ENCODE measurements at regions of chr22 and their contacts with region 1.

Region 1: GRCh38 chr22:35840302-35840739 is 122.6 kb downstream of the APOL5 start:
- DNase-seq: peak; percentile 90 to 96 (median 91)
- H3K4me3 ChIP-seq: peak overlapping the region in 2 of 4 donors; percentile 27 to 51
- H3K27ac ChIP-seq: peak overlapping the region in 3 of 5 donors; percentile 45 to 64 (median 56)
- H3K4me1 ChIP-seq: peaks cover 18 to 50% of the 10 kb centered on the region in 2 donors
- H3K27me3 ChIP-seq: no peaks in the 10 kb centered on the region
- CTCF ChIP-seq: peak in 2 of 6 experiments; percentile 17 to 23
- POLR2A ChIP-seq: peak; percentile 21 to 80

Region 2: DNA sequence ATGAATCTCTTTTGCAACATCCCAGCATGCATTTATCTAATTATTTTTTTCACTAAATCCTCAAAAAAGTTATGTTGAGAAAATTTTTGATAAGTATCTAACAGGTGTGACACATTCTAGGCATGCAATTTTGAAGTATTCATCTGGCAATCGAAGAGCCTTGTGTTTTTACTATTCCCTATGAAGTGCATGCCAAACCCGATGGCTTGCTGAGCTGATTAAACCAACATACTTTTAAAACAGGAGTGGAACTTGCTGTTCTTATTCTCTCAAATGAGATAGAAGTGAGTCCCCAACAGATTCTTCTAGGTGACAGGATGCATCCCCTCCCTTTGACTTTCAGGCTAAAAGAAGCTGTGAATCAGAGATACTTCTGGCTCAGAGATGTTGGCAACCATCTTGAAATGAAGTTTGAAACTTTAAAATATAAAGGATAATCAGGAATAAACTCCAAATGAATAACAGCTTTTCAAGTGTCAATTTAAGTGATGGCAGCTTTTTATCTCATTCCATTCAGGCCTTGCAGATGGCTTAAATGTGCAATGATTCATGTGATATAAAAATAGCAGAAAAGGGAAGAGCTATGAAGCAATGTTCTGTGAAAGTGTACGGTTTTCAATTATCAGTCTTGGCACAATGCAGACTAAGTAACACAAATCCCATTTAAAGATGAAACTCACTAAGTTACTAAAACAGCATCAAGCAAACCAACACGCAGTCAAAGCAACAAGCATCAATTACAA is 55.0 kb before region 1 on chr22:
- intact Hi-C with region 1: loop called in 1 of 2 experiments (anchors 10 kb)
- DNase-seq: no peak
- H3K4me3 ChIP-seq: no peak overlapping the region
- H3K27ac ChIP-seq: peak overlapping the region in 2 of 5 donors; percentile 29 to 39
- H3K4me1 ChIP-seq: peaks cover 11 to 16% of the 10 kb centered on the region in 2 donors
- H3K27me3 ChIP-seq: no peaks in the 10 kb centered on the region
- CTCF ChIP-seq: no peak
- POLR2A ChIP-seq: no peak

Region 3: DNA sequence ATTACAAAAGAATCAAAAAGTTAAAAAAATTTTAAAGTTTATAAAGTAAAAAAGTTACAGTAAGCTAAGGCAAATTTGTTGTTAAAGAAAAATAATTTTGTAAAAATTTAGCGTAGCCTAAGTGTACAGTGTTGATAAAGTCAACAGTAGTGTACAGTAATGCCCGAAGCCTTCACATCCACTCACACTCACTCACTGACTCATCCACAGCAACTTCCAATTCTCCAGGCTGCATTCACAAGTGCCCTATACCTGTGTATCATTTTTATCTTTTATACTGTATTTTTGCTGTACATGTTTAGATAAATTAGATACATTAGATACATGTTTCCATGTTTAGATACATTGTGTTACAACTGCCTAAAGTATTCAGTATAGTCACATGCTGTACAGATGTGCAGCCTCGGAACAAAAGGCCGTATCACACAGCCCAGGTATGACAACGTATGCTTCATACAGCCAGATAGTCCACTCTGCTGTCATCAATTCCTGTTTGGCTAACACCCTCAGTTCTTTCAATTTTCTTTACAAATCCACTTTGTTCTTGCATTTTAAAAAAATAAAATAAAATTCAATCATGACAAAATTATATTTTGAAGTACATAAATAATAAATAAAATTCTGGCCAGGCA is 107.6 kb after region 1 on chr22:
- intact Hi-C with region 1: no loop called
- DNase-seq: no peak
- H3K4me3 ChIP-seq: no peak overlapping the region
- H3K27ac ChIP-seq: no peak overlapping the region
- H3K4me1 ChIP-seq: no peaks in the 10 kb centered on the region
- H3K27me3 ChIP-seq: no peaks in the 10 kb centered on the region
- CTCF ChIP-seq: no peak
- POLR2A ChIP-seq: no peak